ENCODE measurements at regions of chr12 and their contacts with region 1.

Region 1: DNA sequence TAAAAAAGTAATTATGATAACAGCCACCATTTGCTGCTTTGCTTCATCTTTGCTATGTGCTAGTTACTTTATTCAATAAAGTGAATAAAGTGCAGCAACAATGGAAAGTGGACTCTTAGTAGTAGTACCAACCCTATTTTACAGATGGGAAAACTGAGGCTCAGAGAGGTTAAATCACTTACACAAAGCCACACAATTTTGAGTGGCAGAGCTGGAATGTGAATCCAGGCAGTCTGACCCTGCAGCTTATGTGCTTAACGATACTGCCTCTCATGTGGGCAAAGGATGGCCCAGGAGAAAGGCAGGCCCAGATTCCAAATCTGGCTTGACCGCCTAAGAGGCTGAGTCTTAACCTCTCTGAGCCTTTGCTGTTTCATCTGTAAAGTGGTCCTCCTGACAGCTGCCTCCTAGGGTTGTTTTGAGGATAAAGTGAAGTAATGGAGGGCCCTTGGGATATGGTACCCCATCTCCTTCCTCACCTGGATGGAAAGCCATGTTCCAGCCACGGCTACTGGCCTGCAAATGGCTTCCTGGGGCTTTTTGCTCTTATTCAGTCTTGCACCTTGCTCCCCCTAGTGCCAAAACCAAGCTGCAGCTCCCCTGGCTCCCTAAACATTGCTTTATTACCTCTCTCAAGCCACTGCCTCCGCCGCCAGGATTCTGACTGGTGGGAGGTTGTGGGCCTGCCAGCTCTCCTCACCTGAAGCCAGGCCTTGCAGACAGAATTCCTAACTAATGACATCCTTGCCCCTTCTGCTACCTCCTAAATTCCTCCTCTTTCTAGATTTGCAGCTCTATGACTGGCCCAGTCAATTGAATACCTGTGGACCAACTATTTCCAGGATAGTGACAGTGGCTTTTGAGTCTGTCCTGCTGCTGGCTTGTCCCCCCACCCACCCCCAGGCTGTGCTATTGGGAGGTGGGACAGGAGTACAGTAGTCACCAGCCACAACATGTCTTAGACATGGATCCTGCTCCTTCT is 283.3 kb upstream of the PWP1 start:
- DNase-seq: peak; percentile 79
- H3K4me3 Mint-ChIP-seq: no peak overlapping the region
- H3K27ac Mint-ChIP-seq: peak overlapping the region; percentile 22
- H3K4me1 Mint-ChIP-seq: peaks cover 50% of the 10 kb centered on the region
- H3K27me3 Mint-ChIP-seq: no peaks in the 10 kb centered on the region

Region 2: GRCh38 chr12:107309020-107309419 is 93.3 kb before region 1 on chr12:
- CTCF ChIA-PET with region 1: interaction called, 10 read pairs
- DNase-seq: peak; percentile 68
- H3K4me3 Mint-ChIP-seq: no peak overlapping the region
- H3K27ac Mint-ChIP-seq: peak overlapping the region; percentile 47
- H3K4me1 Mint-ChIP-seq: peaks cover 19% of the 10 kb centered on the region
- H3K27me3 Mint-ChIP-seq: peaks cover 20% of the 10 kb centered on the region

Region 3: DNA sequence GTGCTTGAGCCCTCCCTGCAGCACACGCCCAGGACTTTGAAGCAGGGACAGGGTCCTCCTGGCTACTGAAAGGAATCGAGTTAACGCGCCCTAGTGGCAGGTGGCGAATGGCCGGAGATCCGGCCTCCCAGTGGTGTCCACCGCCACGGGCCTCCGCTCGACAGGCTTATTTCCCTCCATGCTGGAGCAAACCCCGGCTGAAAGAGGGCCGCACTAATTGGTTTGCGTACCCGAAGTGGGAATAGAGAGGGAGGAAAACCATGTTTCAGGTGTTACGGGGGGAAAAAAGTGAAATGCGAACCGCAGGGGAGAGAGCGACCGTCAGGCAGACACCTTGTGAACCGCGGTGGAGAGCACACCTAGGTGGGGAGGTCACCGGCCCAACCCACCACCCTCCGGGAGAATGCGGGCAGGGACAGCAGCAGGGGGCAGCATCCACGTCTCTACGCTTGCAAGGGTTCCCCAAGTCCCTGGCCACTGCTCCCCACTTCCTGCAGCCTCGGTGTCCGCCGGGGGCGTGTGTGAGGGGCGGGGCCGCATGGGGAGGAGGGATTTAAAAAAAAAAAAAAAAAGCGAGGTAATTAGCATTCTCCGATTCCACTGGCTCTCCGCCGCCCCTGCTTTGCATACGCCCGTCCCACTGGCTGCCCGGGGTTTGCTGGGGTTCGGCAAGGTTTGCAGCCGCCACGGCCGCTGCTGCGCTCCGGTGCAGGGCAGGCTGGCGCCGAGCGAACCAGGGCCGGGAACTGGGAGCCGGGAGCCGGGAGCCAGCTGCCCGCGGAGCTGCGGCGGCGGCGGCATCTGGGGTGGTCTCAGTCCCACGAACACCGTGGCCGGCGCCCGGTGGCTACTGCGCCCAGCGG is 84.3 kb before region 1 on chr12:
- CTCF ChIA-PET with region 1: interaction called, 93 read pairs
- DNase-seq: peak; percentile 95
- H3K4me3 Mint-ChIP-seq: peak overlapping the region; percentile 88
- H3K27ac Mint-ChIP-seq: peak overlapping the region; percentile 75
- H3K4me1 Mint-ChIP-seq: peaks cover 31% of the 10 kb centered on the region
- H3K27me3 Mint-ChIP-seq: peaks cover 25% of the 10 kb centered on the region

Region 4: GRCh38 chr12:107328442-107329133 is 73.7 kb before region 1 on chr12:
- CTCF ChIA-PET with region 1: interaction called, 93 read pairs
- DNase-seq: no peak
- H3K4me3 Mint-ChIP-seq: no peak overlapping the region
- H3K27ac Mint-ChIP-seq: no peak overlapping the region
- H3K4me1 Mint-ChIP-seq: peaks cover 85% of the 10 kb centered on the region
- H3K27me3 Mint-ChIP-seq: peaks cover 3% of the 10 kb centered on the region

Region 5: GRCh38 chr12:107372229-107372658 is 30.1 kb before region 1 on chr12:
- CTCF ChIA-PET with region 1: interaction called, 20 read pairs
- DNase-seq: peak; percentile 67
- H3K4me3 Mint-ChIP-seq: peak overlapping the region; percentile 40
- H3K27ac Mint-ChIP-seq: peak overlapping the region; percentile 95
- H3K4me1 Mint-ChIP-seq: peaks cover 87% of the 10 kb centered on the region
- H3K27me3 Mint-ChIP-seq: no peaks in the 10 kb centered on the region

Region 6: DNA sequence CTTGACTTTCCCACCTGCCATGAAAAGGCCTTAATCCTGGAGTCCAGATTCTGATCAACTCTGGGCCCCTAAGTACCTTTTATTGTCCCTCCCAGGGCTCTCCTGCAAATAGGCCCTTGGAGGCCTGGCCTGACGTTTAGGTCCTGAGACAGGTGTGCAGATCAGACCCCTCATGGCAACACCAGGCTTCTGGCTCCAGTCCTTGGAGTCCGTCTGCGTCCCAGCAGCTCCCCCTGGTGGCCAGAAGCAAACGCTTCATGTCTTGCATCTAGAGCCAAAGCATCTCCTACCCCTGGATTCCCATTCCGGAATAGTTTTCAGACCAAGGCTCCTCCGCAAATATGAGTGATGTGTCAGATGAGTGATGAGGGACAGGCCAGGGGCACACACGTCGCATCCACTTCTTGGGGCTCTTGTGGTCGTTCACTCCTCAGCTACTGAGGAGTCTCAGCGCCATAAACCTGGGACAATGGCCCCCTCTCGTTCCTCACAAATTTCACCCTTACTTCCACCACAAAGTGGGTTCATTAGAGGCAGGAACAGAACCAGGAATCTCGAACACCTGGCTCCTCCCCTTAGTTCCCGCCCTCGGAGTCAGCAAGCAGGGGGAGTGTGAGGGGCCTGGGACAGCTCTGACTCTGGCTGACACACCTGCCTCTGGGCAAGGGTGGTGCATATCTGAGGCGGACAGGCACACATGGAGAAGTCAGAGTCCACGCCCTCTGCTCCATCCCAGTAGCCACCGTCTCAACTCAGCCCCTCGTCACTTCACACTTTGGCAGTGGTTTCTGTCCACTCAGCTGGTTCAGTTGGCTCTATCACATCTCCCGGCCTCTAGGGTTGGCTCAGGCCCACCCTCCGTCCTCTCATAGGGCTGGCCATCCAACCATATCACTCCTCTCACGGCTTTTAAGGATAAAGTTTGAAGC is 205.4 kb after region 1 on chr12:
- CTCF ChIA-PET with region 1: interaction called, 101 read pairs
- DNase-seq: peak; percentile 85
- H3K4me3 Mint-ChIP-seq: no peak overlapping the region
- H3K27ac Mint-ChIP-seq: no peak overlapping the region
- H3K4me1 Mint-ChIP-seq: no peaks in the 10 kb centered on the region
- H3K27me3 Mint-ChIP-seq: no peaks in the 10 kb centered on the region

Measured in activated naive CD4-positive, alpha-beta T cell treated with anti-CD3 and anti-CD28 coated beads, Interleukin-2, amount 10 ng/mL, durations not matched to agents 7 days and 5 days (primary cell).